IMR-90 (cell line): ENCODE measurements at regions of chr2 and their contacts with region 1.

Region 1: DNA sequence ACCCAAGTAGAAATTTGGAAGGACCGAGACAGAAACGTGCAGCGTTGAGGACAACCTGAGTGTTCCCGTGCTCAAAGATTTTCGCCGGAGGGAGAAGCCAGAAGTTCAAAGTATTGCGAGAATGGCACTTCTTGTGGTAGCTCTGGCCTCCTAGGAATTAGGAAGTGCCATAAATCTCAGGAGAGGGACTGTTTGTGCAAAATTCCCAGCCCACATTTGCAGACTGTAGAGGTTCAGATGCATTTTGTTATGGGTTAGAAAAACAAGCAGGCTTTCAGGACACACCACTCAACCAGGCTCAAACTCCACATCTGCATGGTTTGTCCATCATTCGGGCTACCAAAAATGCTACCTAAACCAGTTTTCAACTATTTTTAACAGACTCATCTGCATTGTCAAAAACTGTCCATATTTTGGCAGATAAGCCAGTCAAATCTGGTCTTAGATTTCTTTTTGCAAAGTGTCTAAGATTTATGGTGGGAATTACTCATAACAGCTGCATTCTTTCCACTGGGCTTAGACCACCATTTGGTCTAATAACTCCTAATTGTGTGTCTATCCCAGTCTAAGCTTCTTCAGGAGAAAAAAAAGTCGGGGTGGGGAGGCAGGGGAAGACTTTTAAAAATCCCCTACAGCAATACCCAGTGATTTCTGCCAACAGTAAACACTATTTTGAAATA is 422.9 kb downstream of the ARHGAP15 start:
- DNase-seq: no peak
- ATAC-seq: no peak
- H3K4me3 ChIP-seq: no peak overlapping the region
- H3K27ac ChIP-seq: no peak overlapping the region
- H3K4me1 ChIP-seq: peaks cover 2% of the 10 kb centered on the region; the same call in 1 of the 2 replicates
- H3K27me3 ChIP-seq: no peaks in the 10 kb centered on the region
- CTCF ChIP-seq: no peak
- POLR2A ChIP-seq: no peak
- RAD21 ChIP-seq: no peak

Region 2: GRCh38 chr2:143259368-143259958 is 292.6 kb before region 1 on chr2:
- CTCF ChIA-PET with region 1: no interaction called
- POLR2A ChIA-PET with region 1: no interaction called
- dilution Hi-C with region 1: no loop called
- in situ Hi-C with region 1: no loop called
- intact Hi-C with region 1: no loop called
- DNase-seq: peak; percentile 73
- ATAC-seq: peak; percentile 92
- H3K4me3 ChIP-seq: peak overlapping the region; percentile 33; the same call in 1 of the 2 replicates
- H3K27ac ChIP-seq: no peak overlapping the region
- H3K4me1 ChIP-seq: 0 out of 2 replicates have a peak, but pooled peaks cover 2% of the 10 kb centered on the region
- H3K27me3 ChIP-seq: peaks cover 6% of the 10 kb centered on the region; the same call in 1 of the 2 replicates
- CTCF ChIP-seq: peak; percentile 86
- POLR2A ChIP-seq: no peak
- RAD21 ChIP-seq: peak; percentile 73

Region 3: DNA sequence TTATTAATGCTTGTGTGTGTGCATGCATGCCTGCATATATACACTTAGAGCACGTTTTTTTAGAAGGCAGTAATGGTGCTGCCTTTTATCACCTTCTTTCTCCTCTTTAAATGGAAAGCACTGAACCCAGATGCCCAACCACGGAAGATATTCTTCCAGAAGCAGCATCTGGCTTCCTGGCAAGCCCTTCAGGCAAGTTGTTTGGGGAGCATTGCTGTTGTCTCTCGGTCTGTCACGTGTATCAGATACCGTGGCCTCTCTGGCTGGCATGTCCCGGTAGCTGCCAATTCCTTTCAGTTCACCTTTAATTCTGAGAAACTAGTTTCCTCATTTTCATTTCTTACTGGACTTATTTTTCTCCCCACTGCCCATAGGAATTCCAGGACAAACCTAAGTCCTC is 164.9 kb after region 1 on chr2:
- CTCF ChIA-PET with region 1: no interaction called
- POLR2A ChIA-PET with region 1: interaction called, 10 read pairs
- dilution Hi-C with region 1: no loop called
- in situ Hi-C with region 1: no loop called
- intact Hi-C with region 1: no loop called
- DNase-seq: peak; percentile 7
- ATAC-seq: peak; percentile 61
- H3K4me3 ChIP-seq: peak overlapping the region; percentile 8; the same call in 1 of the 2 replicates
- H3K27ac ChIP-seq: peak overlapping the region; percentile 31; the same call in 1 of the 2 replicates
- H3K4me1 ChIP-seq: peaks cover 4% of the 10 kb centered on the region; the same call in 1 of the 2 replicates
- H3K27me3 ChIP-seq: no peaks in the 10 kb centered on the region
- CTCF ChIP-seq: no peak
- POLR2A ChIP-seq: no peak
- RAD21 ChIP-seq: no peak